AG04449 (cell line): ENCODE measurements at regions of chr17 and their contacts with region 1.

Region 1: DNA sequence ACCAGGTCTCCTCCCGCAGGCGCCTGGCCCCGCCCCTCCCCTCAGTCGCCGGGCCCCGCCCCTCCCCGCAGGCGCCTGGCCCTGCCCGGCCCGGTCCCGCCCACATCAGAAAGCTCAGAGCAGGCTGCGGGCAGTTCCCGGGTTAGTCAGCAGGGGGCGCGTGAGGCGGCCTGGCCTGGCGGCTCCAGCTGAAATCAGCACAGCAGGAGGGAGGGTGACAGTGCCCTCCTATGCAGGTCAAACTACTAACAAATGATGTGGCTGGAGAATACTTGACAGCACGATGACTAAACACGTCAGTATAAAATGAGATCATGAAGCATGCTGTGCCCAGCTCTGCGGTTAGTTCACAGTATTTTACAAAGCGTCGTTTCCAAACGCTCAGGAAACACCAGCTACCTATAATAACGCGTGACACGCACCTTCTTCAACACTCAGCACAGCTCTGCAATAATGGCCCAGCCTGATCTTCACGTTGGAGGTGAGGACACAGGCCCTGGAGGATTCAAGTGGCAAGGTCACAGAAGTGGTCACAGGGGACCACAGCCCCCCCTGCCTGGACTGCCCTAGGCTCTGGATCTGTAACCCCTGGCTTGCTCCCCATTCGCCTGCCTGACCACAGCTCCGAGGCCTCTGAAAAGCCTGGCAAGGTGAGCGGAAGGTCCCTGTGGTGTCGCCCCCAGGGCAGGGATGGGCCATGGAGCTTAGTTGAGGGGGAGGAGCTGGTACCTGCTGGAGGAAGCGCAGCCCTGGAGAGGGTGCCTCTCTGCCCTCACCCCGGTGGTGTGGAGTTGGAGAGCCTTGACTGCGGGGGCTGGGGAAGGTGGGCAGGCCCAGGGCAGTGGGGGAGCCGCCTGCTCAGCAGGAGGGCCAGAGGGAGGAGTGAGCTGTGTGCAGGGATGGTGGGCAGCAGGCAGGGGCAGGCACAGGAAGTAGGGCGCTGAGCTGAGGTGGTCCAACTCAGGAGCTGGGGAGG is 81.2 kb downstream of the KCNJ12 start:
- DNase-seq: peak; percentile 17
- H3K4me3 ChIP-seq: no peak overlapping the region
- CTCF ChIP-seq: peak; percentile 98

Region 2: GRCh38 chr17:21470861-21471260 is 13.5 kb after region 1 on chr17:
- CTCF ChIA-PET with region 1: interaction called, 13 read pairs
- POLR2A ChIA-PET with region 1: no interaction called
- DNase-seq: no peak
- H3K4me3 ChIP-seq: no peak overlapping the region
- CTCF ChIP-seq: no peak